ENCODE measurements at regions of chr10 and their contacts with region 1.

Region 1: GRCh38 chr10:95430231-95430951 is 130.8 kb downstream of the SORBS1 start:
- DNase-seq: peak; percentile 84
- CTCF ChIP-seq: peak; percentile 89

Region 2: DNA sequence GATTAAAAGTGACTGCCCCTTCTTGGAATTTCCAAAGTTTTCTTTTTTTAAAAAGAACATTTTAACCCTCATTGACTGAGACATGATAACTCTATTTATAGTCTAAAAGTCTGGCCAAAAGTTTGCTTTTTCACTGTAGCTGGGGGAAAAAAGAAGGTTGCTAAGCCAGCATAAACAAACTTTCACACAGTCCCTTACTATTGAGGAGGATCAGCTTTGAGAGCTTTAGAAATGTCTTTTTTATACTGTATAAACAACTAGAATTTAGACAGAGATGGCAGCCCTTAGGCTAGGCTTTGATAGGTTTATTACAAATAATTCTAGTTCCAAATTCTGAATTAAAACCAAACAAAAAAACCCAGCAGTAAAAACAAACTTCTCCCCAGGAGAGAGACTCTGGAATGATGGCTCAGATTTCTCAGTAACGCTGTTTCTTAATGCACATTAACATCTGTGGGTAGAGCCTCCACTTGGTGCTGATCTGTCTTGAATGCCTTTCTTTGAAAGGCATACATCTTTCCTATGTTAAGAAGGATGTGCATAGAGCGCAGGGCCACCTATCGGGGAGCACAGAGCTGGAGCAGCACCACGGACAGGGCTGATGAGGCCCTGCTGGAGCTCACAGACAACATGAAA is 38.7 kb before region 1 on chr10:
- CTCF ChIA-PET with region 1: interaction called, 22 read pairs
- POLR2A ChIA-PET with region 1: no interaction called
- DNase-seq: no peak
- CTCF ChIP-seq: no peak

Region 3: GRCh38 chr10:95406651-95407280 is 23.6 kb before region 1 on chr10:
- CTCF ChIA-PET with region 1: interaction called, 38 read pairs
- POLR2A ChIA-PET with region 1: no interaction called
- DNase-seq: no peak
- CTCF ChIP-seq: no peak

Region 4: GRCh38 chr10:95445837-95446486 is 15.6 kb after region 1 on chr10:
- CTCF ChIA-PET with region 1: interaction called, 217 read pairs
- POLR2A ChIA-PET with region 1: no interaction called
- DNase-seq: peak; percentile 73
- CTCF ChIP-seq: peak; percentile 86

Region 5: DNA sequence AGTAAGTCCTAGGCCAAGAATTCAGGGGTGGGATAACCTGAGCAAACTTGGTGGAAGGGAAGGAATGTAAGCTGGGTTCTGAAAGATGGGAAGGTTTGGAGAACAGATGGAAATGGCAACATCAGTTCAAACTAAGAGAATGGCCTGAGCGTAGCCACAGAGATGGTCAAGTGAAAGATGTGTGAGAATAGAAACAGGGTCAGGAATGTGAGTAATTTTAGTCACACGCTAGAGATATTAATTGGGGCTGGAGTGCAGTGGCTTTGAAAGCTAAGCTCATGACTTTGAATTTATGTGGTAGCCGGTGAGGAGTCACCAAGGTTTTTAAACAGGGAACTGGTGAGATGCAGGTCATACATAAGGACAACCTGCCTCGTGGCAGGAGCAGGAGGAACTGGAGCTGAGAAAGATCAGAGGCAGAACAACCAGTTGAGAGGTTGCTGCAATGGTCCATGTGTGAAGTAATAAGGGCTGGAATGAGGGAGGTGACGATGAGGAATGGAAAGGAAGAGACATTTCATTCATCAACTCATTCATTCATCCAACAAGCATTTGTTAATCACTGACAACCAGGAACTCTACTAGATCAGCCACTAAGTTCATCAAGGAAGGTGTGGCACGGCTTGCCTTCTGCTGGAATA is 143.7 kb after region 1 on chr10:
- CTCF ChIA-PET with region 1: interaction called, 10 read pairs
- POLR2A ChIA-PET with region 1: no interaction called
- DNase-seq: no peak
- CTCF ChIP-seq: no peak